Posterior vena cava (tissue), 2 donors: ENCODE measurements at regions of chr16 and their contacts with region 1.

Region 1: GRCh38 chr16:3879887-3880564 is 487 bp downstream of the CREBBP start:
- DNase-seq: peak; percentile 92

Region 2: DNA sequence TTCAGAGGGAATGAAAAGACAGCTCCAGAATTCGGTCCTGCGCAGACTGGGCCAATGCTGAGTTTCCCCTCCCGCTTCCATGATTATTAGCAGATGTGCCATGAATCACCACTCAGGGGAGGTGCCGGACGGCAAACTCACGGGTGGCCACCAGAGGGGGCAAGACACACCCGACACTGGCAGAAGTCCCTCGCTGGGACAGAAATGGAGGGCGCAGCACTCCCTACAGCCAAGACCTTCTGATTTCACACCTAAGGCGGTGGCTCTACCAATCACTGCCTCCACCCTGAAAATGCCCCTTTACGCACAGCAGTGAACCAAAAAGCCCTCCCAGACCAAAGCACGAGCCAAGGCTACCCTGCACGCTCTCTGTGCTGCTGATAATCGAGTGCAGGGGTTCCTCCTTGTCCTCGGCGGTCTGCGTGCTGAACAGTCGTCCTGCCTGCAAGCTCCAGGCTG is 189.5 kb before region 1 on chr16:
- intact Hi-C with region 1: loop called in 1 of 2 experiments (anchors 10 kb)
- DNase-seq: peak; percentile 97

Region 3: DNA sequence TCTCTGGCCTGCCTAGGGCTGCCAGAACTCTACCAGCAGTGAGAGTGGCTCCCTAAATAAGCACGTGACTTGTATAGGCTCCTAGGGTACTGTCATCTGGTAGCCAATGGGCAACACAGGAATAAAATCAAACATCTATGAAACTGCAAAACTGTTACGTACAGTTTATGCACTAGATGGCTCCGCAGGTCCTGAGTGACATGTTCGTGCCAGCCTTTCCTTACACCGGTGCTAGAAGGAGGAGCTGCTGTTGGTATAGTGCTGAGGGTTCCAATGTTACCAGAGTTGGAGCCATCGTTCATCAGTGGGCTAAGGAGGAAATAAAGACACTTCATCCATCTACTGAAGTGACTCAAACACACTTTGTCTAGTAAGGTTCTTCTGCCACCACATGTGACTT is 99.5 kb before region 1 on chr16:
- intact Hi-C with region 1: loop called in 1 of 2 experiments (anchors 5 kb)
- DNase-seq: no peak